K562 (cell line): ENCODE measurements at regions of chr11 and their contacts with region 1.

Region 1: GRCh38 chr11:207208-207862 is at the starts of genes BET1L and RIC8A:
- DNase-seq: peak; percentile 92 to 99 (median 95)
- ATAC-seq: peak; percentile 87
- H3K4me3 ChIP-seq: peak within 1 kb of the TSS; percentile 96
- H3K27ac ChIP-seq: peak within 1 kb of the TSS; percentile 93
- H3K4me1 ChIP-seq: peaks cover 30 to 56% of the 10 kb centered on the region in 2 experiments; a peak in 4 of 5 replicates
- H3K27me3 ChIP-seq: no peaks in the 10 kb centered on the region; a peak in 1 of 5 replicates
- CTCF ChIP-seq: no peak; a peak in 1 of 6 replicates
- EP300 ChIP-seq: peak; percentile 23; the same call in 1 of the 2 replicates
- POLR2A ChIP-seq: peak; percentile 96
- RAD21 ChIP-seq: no peak
- polyA plus RNA-seq, gene BET1L: 9.9 to 12.1 TPM
- polyA plus RNA-seq, gene RIC8A: 10.7 to 13.6 TPM

Region 2: GRCh38 chr11:223026-223789 is 15.9 kb after region 1 on chr11:
- CTCF ChIA-PET with region 1: no interaction called
- POLR2A ChIA-PET with region 1: interaction called, 63 read pairs
- in situ Hi-C with region 1: no loop called
- intact Hi-C with region 1: no loop called
- DNase-seq: no peak
- ATAC-seq: no peak
- H3K4me3 ChIP-seq: no peak overlapping the region
- H3K27ac ChIP-seq: no peak overlapping the region; the same call in 2 of the 3 replicates
- H3K4me1 ChIP-seq: peaks cover 12 to 26% of the 10 kb centered on the region in 2 experiments; a peak in 4 of 5 replicates
- H3K27me3 ChIP-seq: no peaks in the 10 kb centered on the region
- CTCF ChIP-seq: no peak
- EP300 ChIP-seq: no peak
- POLR2A ChIP-seq: no peak
- RAD21 ChIP-seq: no peak

Region 3: DNA sequence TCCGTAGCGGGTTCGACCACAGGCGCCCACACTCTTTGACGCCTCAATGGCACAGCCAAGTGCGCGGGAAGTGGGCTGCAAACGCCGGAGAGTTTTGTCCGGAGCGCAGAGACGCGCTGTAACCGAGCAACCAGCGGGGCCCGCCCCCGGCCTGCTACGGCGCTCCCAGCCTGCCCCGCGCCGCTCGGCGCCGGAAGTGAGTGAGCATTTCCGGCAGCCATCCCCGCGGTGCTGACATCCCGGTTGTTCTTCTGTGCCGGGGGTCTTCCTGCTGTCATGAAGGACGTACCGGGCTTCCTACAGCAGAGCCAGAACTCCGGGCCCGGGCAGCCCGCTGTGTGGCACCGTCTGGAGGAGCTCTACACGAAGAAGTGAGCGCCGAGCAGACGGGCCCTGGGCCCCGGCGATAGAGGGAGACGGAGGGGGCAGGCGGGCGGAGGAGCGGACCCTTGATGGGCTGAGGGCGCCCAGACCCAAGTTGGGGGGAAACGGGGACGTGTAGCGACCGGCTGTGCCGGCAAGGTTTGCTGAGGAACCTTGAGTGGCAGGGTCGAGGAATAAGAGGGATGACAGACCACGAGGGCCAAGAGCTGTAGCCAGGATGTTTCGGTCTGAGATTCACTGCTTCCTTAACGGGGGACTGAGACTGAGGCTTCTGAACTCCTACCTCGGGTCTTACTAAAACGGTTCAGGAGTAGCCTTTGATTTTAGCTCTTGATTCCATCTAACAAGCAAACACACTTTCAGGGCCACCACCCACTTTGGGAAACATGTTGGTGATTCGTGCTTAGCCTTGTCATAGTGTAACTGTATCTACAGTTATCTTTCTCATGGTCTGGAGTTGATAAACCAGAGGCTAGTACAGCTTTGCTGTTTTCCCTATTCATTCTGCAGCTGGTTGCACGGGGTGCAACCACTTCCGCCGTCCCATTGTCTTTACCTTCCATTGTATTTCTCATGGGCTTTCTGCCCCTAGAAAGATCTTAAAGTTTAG is 29.7 kb after region 1 on chr11 and contains the start of gene PSMD13:
- CTCF ChIA-PET with region 1: no interaction called
- POLR2A ChIA-PET with region 1: interaction called, 6 read pairs
- in situ Hi-C with region 1: no loop called
- intact Hi-C with region 1: loop called (anchors 2 kb)
- DNase-seq: peak; percentile 88 to 93 (median 90)
- ATAC-seq: peak; percentile 97
- H3K4me3 ChIP-seq: peak within 1 kb of the TSS; percentile 97
- H3K27ac ChIP-seq: peak within 1 kb of the TSS; percentile 99
- H3K4me1 ChIP-seq: peaks cover 19 to 21% of the 10 kb centered on the region in 2 experiments; a peak in 4 of 5 replicates
- H3K27me3 ChIP-seq: no peaks in the 10 kb centered on the region
- CTCF ChIP-seq: no peak
- EP300 ChIP-seq: no peak
- POLR2A ChIP-seq: peak; percentile 84
- RAD21 ChIP-seq: no peak
- polyA plus RNA-seq, gene PSMD13: 370 to 383 TPM

Region 4: GRCh38 chr11:363948-364761 is 156.8 kb after region 1 on chr11:
- CTCF ChIA-PET with region 1: no interaction called
- POLR2A ChIA-PET with region 1: interaction called, 3 read pairs
- in situ Hi-C with region 1: loop called (anchors 10 kb)
- intact Hi-C with region 1: no loop called
- DNase-seq: no peak
- ATAC-seq: no peak
- H3K4me3 ChIP-seq: no peak overlapping the region
- H3K27ac ChIP-seq: no peak overlapping the region
- H3K4me1 ChIP-seq: peaks cover 15 to 53% of the 10 kb centered on the region in 2 experiments
- H3K27me3 ChIP-seq: peaks cover 0 to 4% of the 10 kb centered on the region in 2 experiments; a peak in 2 of 5 replicates
- CTCF ChIP-seq: 0 out of 6 replicates have a peak, but pooled peaks of 1 of the 3 experiments have one; percentile 21
- EP300 ChIP-seq: no peak
- POLR2A ChIP-seq: no peak
- RAD21 ChIP-seq: no peak